Activated naive CD4-positive, alpha-beta T cell treated with anti-CD3 and anti-CD28 coated beads, Interleukin-2, amount 10 ng/mL, durations not matched to agents 7 days and 5 days (primary cell): ENCODE measurements at regions of chr1 and their contacts with region 1.

Region 1: DNA sequence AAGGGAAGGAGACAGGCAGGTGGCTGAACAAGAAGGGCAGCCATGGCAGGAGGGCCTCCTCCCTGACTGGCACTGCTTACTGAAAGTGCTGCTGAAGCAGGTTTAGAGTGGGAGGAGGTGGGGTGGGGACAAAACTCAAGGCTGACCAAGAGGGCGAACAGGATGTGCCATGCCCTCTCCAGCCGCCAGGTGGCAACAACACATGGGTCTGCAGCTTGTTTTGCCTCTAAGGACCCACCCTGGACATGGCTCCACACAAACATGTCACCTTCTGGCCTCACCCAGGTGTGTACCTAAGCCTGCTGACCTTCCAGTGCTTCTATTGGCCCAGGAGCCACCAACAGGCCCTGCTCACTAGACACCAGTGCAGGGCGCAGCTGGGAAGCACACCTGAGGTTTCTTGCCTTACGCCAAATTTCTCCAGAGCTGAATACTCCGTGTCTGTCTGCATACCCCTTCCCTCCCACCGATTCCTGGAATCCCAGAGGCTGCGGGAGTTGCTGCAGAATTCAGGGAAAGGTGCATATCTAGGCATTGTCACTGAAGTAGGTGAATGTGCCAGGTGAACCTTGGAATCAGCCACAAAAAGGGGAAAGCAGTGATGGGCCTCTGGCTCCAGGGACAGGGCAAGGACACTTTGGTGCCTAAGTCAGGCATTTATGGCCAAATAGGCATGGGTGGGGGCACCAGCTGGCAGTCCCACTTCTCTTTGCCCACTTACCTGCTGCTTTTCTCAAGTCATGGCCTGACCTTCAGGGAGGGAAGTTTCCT is 5.3 kb downstream of the PSRC1 start:
- DNase-seq: peak; percentile 76
- H3K4me3 Mint-ChIP-seq: no peak overlapping the region
- H3K27ac Mint-ChIP-seq: peak overlapping the region; percentile 24
- H3K4me1 Mint-ChIP-seq: peaks cover 40% of the 10 kb centered on the region
- H3K27me3 Mint-ChIP-seq: peaks cover 4% of the 10 kb centered on the region

Region 2: DNA sequence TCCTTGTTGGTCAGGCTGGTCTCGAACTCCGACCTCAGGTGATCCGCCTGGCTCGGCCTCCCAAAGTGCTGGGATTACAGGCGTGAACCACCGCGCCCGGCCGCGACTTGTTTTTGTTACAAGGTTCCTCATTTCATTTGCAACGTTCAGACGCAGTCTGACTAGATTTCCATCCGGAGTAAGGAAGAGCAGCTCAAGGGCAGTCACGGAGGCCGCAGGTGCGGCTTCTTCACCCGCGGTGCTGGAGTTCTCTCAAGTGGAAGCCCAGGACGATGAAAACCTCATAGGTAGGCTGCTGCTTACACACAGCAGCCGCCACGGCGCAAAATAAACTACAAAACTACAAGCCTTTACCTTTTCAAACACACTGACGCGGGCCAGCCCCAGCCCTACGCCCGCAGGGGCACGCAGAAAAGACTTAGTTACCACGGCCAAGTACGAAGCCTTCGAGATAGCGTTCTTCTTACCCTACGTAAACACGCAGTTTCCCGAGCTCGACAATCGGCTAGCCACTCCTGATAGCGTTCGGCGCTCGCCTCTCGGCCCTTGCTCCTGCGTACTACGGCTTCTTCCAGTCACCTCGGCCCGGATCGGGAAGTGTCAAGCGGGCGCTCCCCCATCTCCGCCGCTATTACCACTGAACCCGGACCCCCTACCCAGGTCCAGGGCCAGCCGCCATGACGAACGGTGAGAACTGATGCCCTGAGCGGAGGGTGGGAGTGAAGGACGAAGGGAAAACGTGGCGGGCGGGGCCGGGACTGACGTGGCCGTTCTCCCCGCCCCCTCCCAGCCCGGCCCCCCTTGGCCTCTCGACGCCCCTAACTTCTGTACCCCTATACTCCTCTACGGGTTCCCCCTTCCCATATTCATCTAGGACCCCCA is 187.2 kb before region 1 on chr1 and contains the start of gene TMEM167B:
- CTCF ChIA-PET with region 1: no interaction called
- DNase-seq: peak; percentile 94
- H3K4me3 Mint-ChIP-seq: peak within 1 kb of the TSS; percentile 92
- H3K27ac Mint-ChIP-seq: peak within 1 kb of the TSS; percentile 97
- H3K4me1 Mint-ChIP-seq: peaks cover 39% of the 10 kb centered on the region
- H3K27me3 Mint-ChIP-seq: no peaks in the 10 kb centered on the region

Region 3: GRCh38 chr1:109213785-109214468 is 63.7 kb before region 1 on chr1 and contains the start of gene SARS1:
- CTCF ChIA-PET with region 1: no interaction called
- DNase-seq: peak; percentile 89
- H3K4me3 Mint-ChIP-seq: peak within 1 kb of the TSS; percentile 99
- H3K27ac Mint-ChIP-seq: peak within 1 kb of the TSS; percentile 95
- H3K4me1 Mint-ChIP-seq: peaks cover 40% of the 10 kb centered on the region
- H3K27me3 Mint-ChIP-seq: peaks cover 20% of the 10 kb centered on the region

Region 4: DNA sequence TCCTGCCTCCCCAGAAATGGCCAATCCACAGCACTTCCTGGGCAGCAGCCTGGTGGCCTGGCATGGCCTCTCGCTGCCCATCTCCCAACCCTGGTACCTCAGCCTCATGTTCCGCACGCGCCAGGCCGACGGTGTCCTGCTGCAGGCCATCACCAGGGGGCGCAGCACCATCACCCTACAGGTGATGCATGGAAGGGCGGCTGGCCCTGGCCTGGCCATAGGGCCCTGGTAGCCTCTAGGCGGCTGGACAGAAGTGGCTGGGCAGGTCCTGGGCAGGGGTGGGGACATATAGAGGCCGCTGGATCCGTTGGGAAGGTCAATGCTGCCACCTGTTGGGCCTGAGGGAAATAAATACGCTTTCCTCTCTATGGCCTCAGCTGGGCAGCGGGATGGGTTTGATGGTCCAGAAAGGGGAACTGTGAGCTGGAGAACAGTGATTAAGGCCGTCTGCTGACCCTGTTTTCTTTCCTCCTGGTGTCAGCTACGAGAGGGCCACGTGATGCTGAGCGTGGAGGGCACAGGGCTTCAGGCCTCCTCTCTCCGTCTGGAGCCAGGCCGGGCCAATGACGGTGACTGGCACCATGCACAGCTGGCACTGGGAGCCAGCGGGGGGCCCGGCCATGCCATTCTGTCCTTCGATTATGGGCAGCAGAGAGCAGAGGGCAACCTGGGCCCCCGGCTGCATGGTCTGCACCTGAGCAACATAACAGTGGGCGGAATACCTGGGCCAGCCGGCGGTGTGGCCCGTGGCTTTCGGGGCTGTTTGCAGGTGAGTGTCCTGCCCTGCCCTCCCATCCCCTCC is 13.8 kb before region 1 on chr1:
- CTCF ChIA-PET with region 1: interaction called, 26 read pairs
- DNase-seq: peak; percentile 86
- H3K4me3 Mint-ChIP-seq: no peak overlapping the region
- H3K27ac Mint-ChIP-seq: no peak overlapping the region
- H3K4me1 Mint-ChIP-seq: peaks cover 3% of the 10 kb centered on the region
- H3K27me3 Mint-ChIP-seq: peaks cover 9% of the 10 kb centered on the region

Region 5: DNA sequence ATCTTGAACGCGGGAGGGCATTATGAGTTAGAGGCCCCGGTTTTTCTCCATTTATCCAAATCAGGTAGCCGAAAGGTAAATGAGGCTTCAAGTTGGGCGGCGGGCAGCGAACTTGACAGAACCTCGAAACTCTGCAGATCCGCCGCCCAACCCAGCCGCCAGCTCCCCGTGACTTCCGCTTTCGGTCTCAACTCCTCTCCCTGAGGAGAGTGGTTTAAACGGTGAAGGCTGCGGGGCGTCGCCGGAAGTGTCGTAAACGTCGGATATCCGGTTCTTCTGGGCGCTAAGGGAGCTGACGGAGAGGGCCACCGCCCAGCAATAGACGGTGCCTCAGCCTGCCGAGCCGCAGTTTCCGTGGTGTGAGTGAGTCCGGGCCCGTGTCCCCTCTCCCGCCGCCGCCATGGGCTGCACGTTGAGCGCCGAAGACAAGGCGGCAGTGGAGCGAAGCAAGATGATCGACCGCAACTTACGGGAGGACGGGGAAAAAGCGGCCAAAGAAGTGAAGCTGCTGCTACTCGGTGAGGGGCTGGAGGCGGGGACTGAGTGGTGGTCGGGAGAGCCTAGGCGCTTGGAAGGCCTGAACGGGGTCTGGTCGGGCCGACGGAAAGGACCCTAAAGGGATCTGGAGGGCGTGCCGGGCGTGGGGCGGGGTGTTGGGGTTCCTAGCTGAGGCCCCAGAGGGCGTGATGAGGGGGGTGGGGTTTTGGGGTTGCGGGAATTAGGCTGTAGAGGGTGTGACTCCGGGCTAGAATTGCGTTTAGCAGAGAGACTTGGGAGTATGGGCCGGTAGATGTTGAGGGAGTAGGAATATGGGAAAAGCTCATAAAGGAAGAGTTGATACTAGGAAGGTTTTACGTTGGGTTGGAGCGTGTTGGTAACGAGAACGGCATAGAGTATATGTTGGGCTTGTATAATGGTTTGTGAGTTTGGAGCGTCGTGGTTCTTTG is 271.0 kb after region 1 on chr1 and contains the start of gene GNAI3:
- CTCF ChIA-PET with region 1: no interaction called
- DNase-seq: peak; percentile 99
- H3K4me3 Mint-ChIP-seq: peak within 1 kb of the TSS; percentile 87
- H3K27ac Mint-ChIP-seq: peak within 1 kb of the TSS; percentile 98
- H3K4me1 Mint-ChIP-seq: peaks cover 47% of the 10 kb centered on the region
- H3K27me3 Mint-ChIP-seq: peaks cover 5% of the 10 kb centered on the region